ENCODE measurements at regions of chr17 and their contacts with region 1.

Region 1: GRCh38 chr17:53032861-53033271 is 789.9 kb upstream of the KIF2B start:
- DNase-seq: peak in 1 of 2 donors; percentile 18
- ATAC-seq: no peak
- H3K4me3 ChIP-seq: no peak overlapping the region
- H3K27ac ChIP-seq: no peak overlapping the region
- H3K4me1 ChIP-seq: no peaks in the 10 kb centered on the region
- H3K27me3 ChIP-seq: no peaks in the 10 kb centered on the region
- CTCF ChIP-seq: peak in 4 of 5 experiments; percentile 38 to 58 (median 48)
- POLR2A ChIP-seq: no peak

Region 2: GRCh38 chr17:53012364-53012763 is 20.5 kb before region 1 on chr17:
- in situ Hi-C with region 1: no loop called
- intact Hi-C with region 1: no loop called
- DNase-seq: no peak
- ATAC-seq: no peak
- H3K4me3 ChIP-seq: no peak overlapping the region
- H3K27ac ChIP-seq: no peak overlapping the region
- H3K4me1 ChIP-seq: no peaks in the 10 kb centered on the region
- H3K27me3 ChIP-seq: no peaks in the 10 kb centered on the region
- CTCF ChIP-seq: no peak
- POLR2A ChIP-seq: no peak

Region 3: DNA sequence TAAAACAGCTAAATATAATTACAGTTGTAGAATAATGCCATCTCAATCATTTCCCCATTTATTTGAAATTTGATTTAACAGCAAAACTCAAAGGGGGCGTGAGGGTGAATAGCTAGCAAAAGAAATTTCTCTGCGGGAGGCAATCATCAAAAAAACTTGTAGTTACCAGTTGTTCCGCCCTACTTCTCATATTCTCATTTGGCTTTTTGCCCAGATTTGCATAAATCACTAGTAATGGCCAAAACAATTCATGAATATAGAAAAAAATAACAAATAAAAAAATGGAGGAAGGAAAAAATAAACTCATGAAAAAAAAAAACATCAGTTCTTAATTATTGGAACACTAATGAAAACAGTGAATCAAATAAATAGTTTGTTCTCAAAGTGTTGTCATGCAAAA is 67.3 kb after region 1 on chr17:
- in situ Hi-C with region 1: no loop called
- intact Hi-C with region 1: no loop called
- DNase-seq: no peak
- ATAC-seq: no peak
- H3K4me3 ChIP-seq: no peak overlapping the region
- H3K27ac ChIP-seq: no peak overlapping the region
- H3K4me1 ChIP-seq: peaks cover 0 to 4% of the 10 kb centered on the region in 2 donors
- H3K27me3 ChIP-seq: no peaks in the 10 kb centered on the region
- CTCF ChIP-seq: no peak
- POLR2A ChIP-seq: no peak

Region 4: GRCh38 chr17:53150101-53150698 is 117.3 kb after region 1 on chr17:
- in situ Hi-C with region 1: no loop called
- intact Hi-C with region 1: loop called (anchors 5 kb)
- DNase-seq: no peak
- ATAC-seq: no peak
- H3K4me3 ChIP-seq: no peak overlapping the region
- H3K27ac ChIP-seq: no peak overlapping the region
- H3K4me1 ChIP-seq: no peaks in the 10 kb centered on the region
- H3K27me3 ChIP-seq: no peaks in the 10 kb centered on the region
- CTCF ChIP-seq: peak in 1 of 5 experiments; percentile 46
- POLR2A ChIP-seq: no peak

Measured in gastrocnemius medialis (tissue), 4 donors.